ENCODE measurements at regions of chr11 and their contacts with region 1.

Region 1: DNA sequence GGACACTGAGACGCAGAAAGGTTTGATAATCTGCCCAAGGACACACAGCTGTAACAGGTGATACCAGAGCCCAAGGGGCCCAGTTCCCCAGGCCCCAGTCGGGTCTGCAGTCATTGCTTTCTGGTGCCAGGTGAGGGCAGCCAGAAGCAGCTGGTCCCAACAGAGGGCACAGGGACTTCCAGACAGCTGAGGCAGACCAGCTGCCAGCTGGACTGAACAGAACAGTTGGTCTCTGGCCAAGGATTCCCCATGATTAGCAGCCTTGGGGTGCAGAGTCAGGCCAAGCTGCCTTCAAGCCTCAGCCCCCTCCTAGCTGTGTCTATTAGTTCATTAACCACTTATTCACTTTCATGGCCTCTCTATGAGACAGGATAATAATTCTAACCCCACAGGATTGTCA is 105.6 kb downstream of the RRAS2 start:
- DNase-seq: no peak
- ATAC-seq: no peak

Region 2: DNA sequence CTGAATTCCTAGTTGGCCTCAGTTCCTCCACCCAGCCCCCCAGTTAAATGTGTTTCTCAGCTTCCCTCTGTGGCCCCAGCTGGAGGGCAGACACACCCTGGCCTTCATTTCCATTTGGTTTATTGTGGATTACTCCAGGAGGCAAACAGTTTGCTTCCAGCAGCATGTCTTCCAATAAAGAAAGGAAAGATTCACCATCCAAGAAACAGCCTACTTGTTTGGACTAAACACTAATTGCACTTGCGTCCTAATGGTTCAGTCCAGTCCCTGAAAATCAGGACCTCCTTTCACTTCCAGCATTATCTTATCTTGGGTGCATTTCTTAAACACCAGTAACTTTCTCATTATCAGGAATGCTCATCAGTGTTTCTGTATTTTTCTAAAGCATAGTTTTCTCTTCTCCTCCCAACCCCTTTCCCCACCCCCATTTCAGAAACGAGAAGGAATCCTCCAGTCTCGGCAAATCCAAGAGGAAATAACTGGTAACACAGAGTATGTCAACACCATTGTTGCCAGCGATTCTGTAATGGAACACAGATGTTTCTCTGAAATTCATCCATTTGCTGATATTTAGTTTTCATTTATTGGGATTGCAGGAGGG is 1745.2 kb before region 1 on chr11:
- intact Hi-C with region 1: no loop called
- DNase-seq: no peak
- ATAC-seq: peak; percentile 91

Region 3: GRCh38 chr11:13705710-13706109 is 547.7 kb before region 1 on chr11:
- intact Hi-C with region 1: no loop called
- DNase-seq: no peak
- ATAC-seq: no peak

Region 4: GRCh38 chr11:13955971-13956421 is 297.4 kb before region 1 on chr11:
- intact Hi-C with region 1: loop called (anchors 5 kb)
- DNase-seq: peak; percentile 68
- ATAC-seq: peak; percentile 81

Measured in sciatic nerve (tissue), 2 donors.